Activated T-helper 2 cell treated with anti-CD3 and anti-CD28 coated beads, Interferon-gamma antibody, Interleukin-2, Interleukin-4, amounts not matched to agents 10 μg/mL and 5 μg/mL and 100 μg/mL, durations not matched to agents 14 hours and 24 hours and 36 hours (primary cell): ENCODE measurements at regions of chr7 and their contacts with region 1.

Region 1: DNA sequence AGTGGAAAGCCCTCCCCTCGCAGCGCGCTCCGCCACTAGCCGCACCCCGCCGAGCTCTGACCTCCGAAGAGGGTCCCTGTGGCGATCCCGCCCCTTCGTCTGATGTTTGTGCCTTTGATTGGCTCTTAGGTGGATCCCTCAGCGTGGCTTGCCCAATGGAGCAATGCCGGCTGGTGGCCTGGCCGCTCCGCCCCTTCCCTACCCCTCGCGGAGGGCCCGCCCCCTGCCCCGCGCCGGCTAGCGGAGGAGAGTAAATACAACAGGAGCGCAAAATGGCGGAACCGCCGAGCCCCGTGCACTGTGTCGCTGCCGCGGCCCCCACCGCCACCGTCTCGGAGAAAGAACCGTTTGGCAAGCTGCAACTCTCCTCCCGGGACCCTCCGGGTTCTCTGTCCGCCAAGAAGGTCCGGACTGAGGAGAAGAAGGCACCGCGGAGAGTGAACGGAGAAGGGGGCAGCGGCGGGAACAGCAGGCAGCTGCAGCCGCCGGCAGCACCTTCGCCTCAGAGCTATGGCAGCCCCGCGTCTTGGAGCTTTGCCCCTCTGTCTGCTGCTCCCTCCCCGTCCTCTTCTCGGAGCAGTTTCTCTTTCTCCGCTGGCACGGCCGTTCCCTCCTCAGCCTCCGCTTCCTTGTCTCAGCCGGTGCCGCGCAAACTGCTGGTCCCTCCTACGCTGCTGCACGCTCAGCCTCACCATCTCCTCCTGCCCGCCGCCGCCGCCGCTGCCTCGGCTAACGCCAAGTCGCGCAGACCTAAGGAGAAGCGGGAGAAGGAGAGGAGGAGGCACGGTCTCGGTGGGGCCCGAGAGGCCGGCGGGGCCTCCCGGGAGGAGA is at the start of gene RSBN1L:
- DNase-seq: peak; percentile 98
- H3K4me3 Mint-ChIP-seq: peak within 1 kb of the TSS; percentile 92
- H3K27ac Mint-ChIP-seq: peak within 1 kb of the TSS; percentile 95
- H3K4me1 Mint-ChIP-seq: peaks cover 37% of the 10 kb centered on the region
- H3K27me3 Mint-ChIP-seq: no peaks in the 10 kb centered on the region
- total RNA-seq, gene RSBN1L: 28.1 and 28.8 TPM in 2 replicates

Region 2: DNA sequence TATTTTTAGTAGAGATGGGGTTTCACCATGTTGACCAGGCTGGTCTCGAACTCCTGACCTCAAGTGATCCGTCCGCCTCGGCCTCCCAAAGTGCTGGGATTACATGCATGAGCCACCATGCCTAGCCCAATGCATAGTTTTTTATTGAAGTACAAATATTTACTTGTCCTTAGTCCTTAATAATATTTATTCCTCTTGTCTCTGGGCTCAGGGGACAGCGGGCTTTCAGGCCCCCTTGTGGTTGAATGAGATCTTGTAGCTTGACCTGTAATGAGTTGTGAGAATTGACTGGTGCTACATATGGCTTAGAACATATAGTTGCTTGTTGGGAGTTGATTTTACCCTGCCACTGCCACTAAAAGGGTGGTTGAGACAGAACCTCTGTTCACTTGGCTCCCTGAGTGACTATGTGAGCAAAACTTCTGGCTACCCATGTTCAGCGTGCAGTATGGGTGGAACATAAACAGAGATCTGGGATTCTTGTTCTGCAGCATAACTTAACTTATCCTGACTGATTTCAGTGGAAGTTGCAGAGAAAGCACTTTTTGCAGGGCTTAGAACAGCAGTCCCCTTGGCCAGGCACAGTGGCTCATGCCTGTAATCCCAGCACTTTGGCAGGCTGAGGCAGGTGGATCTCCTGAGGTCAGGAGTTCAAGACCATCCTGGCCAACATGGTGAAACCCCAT is 1939.3 kb before region 1 on chr7:
- intact Hi-C with region 1: no loop called
- DNase-seq: no peak
- H3K4me3 Mint-ChIP-seq: no peak overlapping the region
- H3K27ac Mint-ChIP-seq: no peak overlapping the region
- H3K4me1 Mint-ChIP-seq: peaks cover under 1% of the 10 kb centered on the region
- H3K27me3 Mint-ChIP-seq: no peaks in the 10 kb centered on the region

Region 3: DNA sequence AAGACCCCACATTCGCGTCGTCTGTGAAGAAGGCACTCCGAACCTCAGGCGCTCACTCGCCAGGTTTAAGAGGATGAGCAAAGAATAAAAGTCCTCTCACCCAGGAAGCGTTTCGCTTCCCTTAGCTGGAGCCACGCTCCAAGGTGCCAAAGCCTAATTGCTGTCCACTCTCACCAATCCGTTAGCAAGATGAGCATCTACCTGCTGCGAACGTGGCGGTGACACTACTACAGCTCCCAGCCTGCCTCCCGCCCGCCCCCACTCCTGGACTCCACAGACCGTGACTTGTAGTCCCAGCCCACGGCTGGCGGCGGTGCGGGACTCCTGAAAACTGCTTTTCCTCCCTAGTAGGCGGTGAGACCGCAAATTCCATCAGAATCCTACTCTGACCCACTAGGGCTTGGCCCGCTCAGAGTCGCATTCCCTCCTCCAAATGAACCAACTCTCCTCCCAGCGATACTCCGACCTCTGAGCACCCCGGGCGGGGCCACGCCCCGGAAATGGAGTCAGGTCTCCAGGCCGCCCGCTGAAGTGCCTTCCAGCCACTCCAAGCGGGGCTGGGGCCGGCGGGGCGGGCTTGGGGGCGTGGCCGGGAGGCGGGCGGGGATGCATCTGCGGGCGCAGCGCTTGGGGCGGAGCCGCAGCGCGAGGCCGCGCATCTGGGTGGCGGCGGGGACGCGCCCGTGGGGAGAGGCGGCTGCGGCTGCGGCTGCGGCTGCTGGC is 159.8 kb before region 1 on chr7:
- intact Hi-C with region 1: loop called (anchors 1 kb)
- DNase-seq: peak; percentile 93
- H3K4me3 Mint-ChIP-seq: peak overlapping the region; percentile 87
- H3K27ac Mint-ChIP-seq: peak overlapping the region; percentile 70
- H3K4me1 Mint-ChIP-seq: peaks cover 14% of the 10 kb centered on the region
- H3K27me3 Mint-ChIP-seq: no peaks in the 10 kb centered on the region

Region 4: DNA sequence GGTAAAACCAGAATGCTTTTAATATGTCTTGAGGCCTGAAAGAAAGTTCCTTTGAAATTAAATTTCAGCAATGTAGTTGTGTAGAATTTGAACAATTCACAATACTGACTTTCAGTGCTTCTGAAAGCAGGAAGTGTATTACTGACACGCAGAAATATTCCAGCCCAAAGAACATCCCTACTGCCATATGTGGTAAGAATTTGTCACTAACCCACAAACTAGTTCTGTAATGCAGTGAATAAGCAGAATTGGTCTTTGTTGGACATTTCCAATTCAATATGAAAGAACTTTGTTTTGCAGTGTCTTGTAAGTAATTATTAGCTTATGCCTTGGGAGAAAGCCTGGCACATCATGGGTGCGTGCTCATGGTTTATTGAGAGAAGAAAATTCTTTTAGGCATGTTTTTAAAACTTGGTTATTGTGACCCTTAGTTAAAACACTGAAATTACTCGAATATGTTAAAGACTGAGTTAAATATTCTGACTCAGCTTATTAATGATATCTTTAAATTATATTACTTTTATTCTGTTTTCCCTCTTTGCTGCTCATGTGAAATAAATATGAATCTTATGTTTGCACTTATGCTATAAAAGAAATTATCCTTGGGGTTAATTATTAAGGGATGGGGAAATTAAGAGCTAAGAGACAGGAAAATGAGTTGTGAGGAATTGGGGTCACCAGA is 125.9 kb before region 1 on chr7:
- intact Hi-C with region 1: no loop called
- DNase-seq: no peak
- H3K4me3 Mint-ChIP-seq: no peak overlapping the region
- H3K27ac Mint-ChIP-seq: no peak overlapping the region
- H3K4me1 Mint-ChIP-seq: no peaks in the 10 kb centered on the region
- H3K27me3 Mint-ChIP-seq: no peaks in the 10 kb centered on the region

Region 5: DNA sequence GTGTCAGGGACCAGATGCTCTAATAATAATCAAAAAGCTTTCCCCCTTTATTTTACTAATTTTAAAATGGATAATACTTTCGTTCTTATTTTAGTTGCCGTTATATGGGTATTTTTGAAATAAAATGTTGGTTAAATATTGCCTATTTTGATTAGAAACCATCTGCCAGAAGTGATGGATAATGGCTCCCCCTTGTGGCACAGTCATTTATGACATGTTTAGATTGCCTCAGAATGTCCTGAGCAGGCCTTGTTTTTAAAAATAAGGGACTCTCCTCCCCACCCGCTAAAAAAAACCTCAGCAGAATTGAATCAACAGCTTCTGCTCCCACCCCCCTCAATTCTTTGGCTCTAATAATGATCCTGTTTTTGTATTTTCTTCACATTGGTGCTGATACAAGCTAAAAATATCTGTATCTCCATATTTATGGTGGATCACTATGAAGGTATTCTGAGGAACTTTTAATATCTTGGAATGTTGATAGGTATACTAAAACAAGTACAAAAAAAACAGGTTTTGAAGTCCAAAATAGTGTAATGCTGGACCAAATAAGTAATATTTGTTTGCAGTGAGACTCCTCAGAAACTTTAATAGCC is 63.0 kb after region 1 on chr7:
- intact Hi-C with region 1: loop called (anchors 2 kb)
- DNase-seq: peak; percentile 46
- H3K4me3 Mint-ChIP-seq: no peak overlapping the region
- H3K27ac Mint-ChIP-seq: no peak overlapping the region
- H3K4me1 Mint-ChIP-seq: peaks cover 26% of the 10 kb centered on the region
- H3K27me3 Mint-ChIP-seq: no peaks in the 10 kb centered on the region

Region 6: GRCh38 chr7:78020136-78020873 is 323.9 kb after region 1 on chr7:
- intact Hi-C with region 1: loop called (anchors 2 kb)
- DNase-seq: no peak
- H3K4me3 Mint-ChIP-seq: peak overlapping the region; percentile 63
- H3K27ac Mint-ChIP-seq: peak overlapping the region; percentile 56
- H3K4me1 Mint-ChIP-seq: peaks cover 17% of the 10 kb centered on the region
- H3K27me3 Mint-ChIP-seq: peaks cover 52% of the 10 kb centered on the region